HEK293T (cell line): ENCODE measurements at regions of chr12 and their contacts with region 1.

Region 1: DNA sequence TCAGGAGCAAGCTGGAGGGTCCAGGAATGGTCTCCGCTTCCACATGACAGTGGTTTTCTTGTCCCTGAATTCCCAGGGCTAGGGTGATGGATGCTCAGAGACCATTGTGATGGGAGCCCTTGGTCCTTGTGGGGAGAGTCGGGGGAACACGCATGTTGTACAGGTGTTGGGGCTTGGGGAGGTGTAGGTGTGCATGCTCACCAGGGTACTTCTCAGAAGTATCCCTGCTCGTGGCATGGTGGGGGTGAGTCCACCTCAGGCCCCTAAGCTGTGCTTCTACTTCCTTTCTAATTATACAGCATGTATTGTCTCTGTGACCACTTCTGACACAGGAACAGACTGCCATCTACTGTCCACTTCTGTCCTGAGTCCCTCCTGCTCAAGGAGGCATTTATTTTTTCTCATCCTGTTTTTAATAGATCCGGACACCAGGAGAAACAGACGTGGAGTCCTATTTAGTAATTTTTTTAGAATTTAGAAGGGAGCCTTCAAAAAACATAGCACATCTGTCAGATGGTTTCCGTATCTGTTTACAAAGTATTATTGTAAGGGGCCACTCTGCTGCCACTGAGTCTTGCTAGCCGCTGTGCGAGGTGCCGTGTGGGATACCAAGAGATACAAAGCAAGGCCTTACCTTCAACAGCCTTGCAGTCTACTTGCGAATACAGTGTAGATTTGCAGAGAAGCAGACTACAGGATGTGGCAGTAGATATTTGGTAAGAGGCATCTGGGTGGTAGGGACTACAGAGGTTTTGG is 10.5 kb downstream of the NTF3 start:
- DNase-seq: peak; percentile 35

Region 2: DNA sequence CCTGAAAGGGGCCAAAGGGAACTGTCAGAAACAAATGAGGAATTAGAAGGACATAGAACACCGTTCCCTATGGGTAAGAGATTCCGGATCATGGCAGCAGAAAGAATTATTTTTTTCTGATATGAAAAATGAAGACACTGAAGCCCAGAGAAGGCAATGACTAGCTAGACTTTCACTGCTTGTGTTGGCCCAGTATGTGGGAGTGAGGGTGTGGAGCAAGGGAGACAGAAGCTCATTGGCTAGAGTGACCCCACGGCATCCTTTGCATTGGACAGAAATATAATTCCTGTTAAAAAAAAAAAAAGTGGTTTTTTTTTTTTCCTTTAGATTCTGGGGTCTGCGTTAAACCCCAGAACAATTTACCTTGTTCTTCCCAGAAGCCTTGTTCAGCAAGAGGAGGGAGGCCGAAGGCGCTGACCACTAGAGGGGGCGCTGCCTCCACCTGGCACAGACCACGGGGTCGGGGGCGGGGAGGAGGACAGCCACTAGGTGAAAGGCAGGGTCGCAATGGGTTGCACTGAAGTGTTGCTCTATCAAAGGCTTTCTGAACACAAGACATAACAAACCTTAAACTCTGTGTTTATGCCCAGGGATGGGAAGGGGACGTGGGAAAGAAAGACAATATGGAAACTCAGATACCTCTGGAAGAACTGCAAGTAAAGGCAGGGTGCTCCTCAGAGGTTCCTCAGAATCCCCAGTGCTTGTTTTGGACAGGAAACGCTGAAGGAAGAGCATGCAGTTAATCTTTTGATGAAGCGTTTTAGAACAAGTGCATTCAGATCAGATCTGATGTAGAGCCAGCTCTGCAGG is 241.9 kb before region 1 on chr12:
- CTCF ChIA-PET with region 1: interaction called, 11 read pairs
- POLR2A ChIA-PET with region 1: no interaction called
- DNase-seq: peak; percentile 67

Region 3: DNA sequence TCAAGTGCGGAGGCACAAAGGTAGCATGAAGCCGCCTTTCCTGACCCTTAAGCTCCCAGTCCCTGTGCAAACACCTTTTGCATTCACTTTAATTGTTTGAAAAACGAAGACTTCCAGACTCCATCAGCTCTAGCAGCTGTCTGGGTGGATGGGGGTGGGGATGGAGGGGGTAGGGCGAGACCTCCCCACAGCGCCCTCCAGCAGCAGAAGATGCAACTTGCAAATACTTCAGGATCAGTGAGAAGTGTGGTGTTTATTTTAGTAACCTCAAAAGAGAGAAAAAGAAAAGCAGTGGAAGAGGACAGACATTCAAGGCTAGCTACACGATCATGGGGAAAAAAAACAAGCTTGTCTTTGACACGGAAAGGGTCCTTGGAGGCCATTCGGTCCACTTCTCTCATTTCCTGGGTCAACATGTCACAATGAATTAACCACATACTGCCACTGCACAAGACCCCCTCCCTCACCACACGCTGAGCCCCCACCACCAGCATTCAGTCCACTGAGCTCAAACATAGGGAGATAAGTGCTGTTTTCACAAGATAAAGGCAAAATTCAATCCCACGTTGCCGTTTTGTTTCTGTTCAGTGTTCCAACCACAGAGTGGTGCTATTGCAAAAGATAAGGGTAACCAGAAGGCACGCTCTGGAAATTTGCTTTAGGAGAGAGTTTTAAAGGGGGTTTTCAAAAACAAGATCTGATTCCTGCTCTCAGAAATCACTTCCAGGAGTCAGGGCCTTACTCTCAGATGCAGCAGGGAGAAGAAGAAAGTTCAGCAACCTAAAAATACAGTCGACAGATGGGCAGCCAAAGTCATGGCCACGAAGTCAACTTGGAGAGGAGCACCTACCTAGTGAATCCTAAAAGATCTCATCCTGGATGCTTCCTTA is 13.9 kb before region 1 on chr12:
- CTCF ChIA-PET with region 1: interaction called, 26 read pairs
- POLR2A ChIA-PET with region 1: interaction called, 3 read pairs
- DNase-seq: no peak